ENCODE measurements at regions of chr9 and their contacts with region 1.

Region 1: DNA sequence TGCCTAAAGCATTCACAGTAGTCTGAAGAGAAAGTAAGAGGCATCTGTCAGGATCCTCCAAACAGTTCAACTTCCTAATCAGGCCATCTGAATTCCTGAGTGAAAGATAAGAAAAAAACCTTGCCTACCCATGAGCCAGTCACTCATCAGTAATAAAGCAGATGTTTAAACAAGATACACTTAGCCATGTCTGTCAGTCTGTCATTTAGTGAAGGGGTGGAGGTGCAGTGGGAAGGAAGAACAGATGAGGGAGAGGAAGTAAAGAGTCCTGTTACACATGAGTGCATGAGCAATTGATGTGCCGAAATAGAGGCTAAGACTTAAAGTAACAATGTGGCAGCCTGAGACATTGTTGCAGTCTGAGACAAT is 29.9 kb upstream of the DMRTA1 start:
- DNase-seq: peak; percentile 75
- H3K4me3 ChIP-seq: peak overlapping the region in 1 of 3 experiments; percentile 33
- H3K27ac ChIP-seq: peak overlapping the region; percentile 80
- H3K4me1 ChIP-seq: peaks cover 29% of the 10 kb centered on the region
- H3K27me3 ChIP-seq: no peaks in the 10 kb centered on the region
- CTCF ChIP-seq: no peak
- POLR2A ChIP-seq: no peak

Region 2: GRCh38 chr9:22147813-22148524 is 268.7 kb before region 1 on chr9:
- CTCF ChIA-PET with region 1: no interaction called
- POLR2A ChIA-PET with region 1: no interaction called
- dilution Hi-C with region 1: no loop called
- intact Hi-C with region 1: loop called (anchors 10 kb)
- DNase-seq: peak; percentile 69
- H3K4me3 ChIP-seq: no peak overlapping the region
- H3K27ac ChIP-seq: peak overlapping the region; percentile 49
- H3K4me1 ChIP-seq: peaks cover 33% of the 10 kb centered on the region
- H3K27me3 ChIP-seq: no peaks in the 10 kb centered on the region
- CTCF ChIP-seq: no peak
- POLR2A ChIP-seq: no peak

Region 3: GRCh38 chr9:22316645-22317044 is 100.0 kb before region 1 on chr9:
- CTCF ChIA-PET with region 1: no interaction called
- POLR2A ChIA-PET with region 1: no interaction called
- dilution Hi-C with region 1: no loop called
- intact Hi-C with region 1: loop called (anchors 5 kb)
- DNase-seq: no peak
- H3K4me3 ChIP-seq: no peak overlapping the region
- H3K27ac ChIP-seq: no peak overlapping the region
- H3K4me1 ChIP-seq: no peaks in the 10 kb centered on the region
- H3K27me3 ChIP-seq: no peaks in the 10 kb centered on the region
- CTCF ChIP-seq: no peak
- POLR2A ChIP-seq: no peak

Region 4: DNA sequence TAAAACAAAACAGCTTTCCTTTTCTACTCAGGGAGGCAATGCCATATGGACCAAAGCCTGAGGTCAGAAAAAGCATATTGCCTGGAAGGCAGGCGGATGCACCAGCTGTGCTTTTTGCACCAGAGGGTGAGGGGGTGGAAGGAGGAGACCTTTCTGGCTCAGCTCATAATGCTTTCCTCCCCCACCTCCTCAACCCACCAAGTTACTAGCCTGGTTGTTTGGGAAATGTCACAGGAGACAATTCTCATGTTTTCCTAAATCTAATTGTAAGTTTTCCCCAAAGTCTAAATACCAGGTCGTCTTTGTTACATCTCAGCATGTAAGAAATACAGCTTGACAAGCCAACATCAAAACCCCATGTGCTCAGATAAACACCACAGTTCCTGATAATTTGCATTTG is 42.6 kb before region 1 on chr9:
- CTCF ChIA-PET with region 1: no interaction called
- POLR2A ChIA-PET with region 1: no interaction called
- dilution Hi-C with region 1: no loop called
- intact Hi-C with region 1: no loop called
- DNase-seq: no peak
- H3K4me3 ChIP-seq: no peak overlapping the region
- H3K27ac ChIP-seq: no peak overlapping the region
- H3K4me1 ChIP-seq: no peaks in the 10 kb centered on the region
- H3K27me3 ChIP-seq: peaks cover 0 to 2% of the 10 kb centered on the region in 2 experiments
- CTCF ChIP-seq: no peak
- POLR2A ChIP-seq: no peak